ENCODE measurements at regions of chr3 and their contacts with region 1.

Region 1: GRCh38 chr3:124467980-124468902 is 262.0 kb upstream of the UMPS start:
- DNase-seq: no peak
- H3K4me3 ChIP-seq: no peak overlapping the region
- CTCF ChIP-seq: peak; percentile 99

Region 2: GRCh38 chr3:124014366-124014942 is 453.8 kb before region 1 on chr3:
- CTCF ChIA-PET with region 1: interaction called, 47 read pairs
- POLR2A ChIA-PET with region 1: no interaction called
- DNase-seq: no peak
- H3K4me3 ChIP-seq: no peak overlapping the region
- CTCF ChIP-seq: no peak

Region 3: GRCh38 chr3:124363476-124363875 is 104.8 kb before region 1 on chr3:
- CTCF ChIA-PET with region 1: interaction called, 15 read pairs
- POLR2A ChIA-PET with region 1: no interaction called
- DNase-seq: peak; percentile 68
- H3K4me3 ChIP-seq: no peak overlapping the region
- CTCF ChIP-seq: no peak

Region 4: DNA sequence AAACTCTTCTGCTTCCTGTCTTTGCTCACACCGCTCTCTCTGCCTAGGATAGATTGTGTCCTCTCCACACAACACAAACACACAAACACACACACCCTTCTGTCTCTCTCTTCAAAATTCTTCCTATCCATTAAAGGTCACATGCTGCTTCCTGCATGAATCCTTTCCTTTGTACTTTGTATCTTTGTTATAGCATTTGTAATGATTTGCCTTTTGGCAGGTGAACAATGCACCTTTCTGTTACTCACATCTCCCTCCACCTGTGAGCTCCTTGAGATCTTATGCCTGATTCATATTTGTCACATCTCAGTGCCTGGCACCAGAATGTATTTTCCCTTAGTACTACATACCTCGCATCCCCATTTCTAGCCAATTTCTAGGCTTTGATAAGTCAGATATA is 10.6 kb after region 1 on chr3:
- CTCF ChIA-PET with region 1: interaction called, 28 read pairs
- POLR2A ChIA-PET with region 1: no interaction called
- DNase-seq: no peak
- H3K4me3 ChIP-seq: no peak overlapping the region
- CTCF ChIP-seq: no peak

Region 5: GRCh38 chr3:124552239-124552638 is 84.0 kb after region 1 on chr3:
- CTCF ChIA-PET with region 1: interaction called, 47 read pairs
- POLR2A ChIA-PET with region 1: no interaction called
- DNase-seq: no peak
- H3K4me3 ChIP-seq: no peak overlapping the region
- CTCF ChIP-seq: no peak